ENCODE measurements at regions of chr7 and their contacts with region 1.

Region 1: DNA sequence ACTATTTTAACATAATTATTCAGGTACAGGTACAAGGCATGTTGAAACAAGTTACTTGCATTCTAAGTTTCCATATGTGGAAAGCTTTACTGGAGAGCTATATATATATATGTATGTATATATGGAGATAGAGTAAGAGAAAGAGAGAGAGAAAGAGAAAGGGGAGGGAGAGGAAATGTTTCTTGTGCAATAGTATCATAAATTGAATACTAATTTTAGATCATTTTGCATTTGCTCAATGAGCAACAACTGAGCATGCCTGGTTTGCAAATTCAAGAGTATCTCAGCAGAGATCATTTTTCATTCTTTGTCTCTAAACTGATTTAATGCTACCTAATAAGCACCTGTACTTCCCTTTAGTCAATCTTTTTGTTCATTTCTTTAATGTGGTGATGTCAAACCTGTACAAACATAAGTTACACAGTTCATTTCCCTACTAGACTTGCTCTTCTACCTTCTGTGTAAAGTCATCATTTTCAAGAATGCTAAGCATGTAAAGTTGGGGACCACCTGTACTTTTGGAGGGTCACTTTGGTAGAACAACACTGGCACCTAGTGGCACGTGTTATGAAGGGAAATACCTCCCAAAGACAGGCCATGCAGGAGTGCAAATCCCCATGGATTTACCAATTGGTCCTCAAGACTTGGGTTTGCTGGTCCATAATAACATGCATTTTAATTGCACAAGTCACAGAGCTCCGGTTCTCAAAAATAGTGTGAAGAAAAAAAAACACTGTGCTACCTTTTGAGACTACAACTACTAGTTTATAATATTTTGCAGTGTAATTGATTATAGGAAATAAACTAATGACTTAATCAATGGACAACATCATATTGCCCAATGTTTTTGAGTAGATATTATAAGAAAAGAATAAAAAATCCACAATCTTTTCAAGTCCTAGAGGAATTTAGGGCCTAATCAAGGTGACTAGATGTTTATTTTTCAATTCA is 431.2 kb upstream of the IGFBP3 start:
- DNase-seq: peak; percentile 55
- CTCF ChIP-seq: peak; percentile 36

Region 2: GRCh38 chr7:45923290-45923689 is 429.0 kb before region 1 on chr7:
- in situ Hi-C with region 1: loop called (anchors 5 kb)
- DNase-seq: no peak
- CTCF ChIP-seq: peak; percentile 84

Region 3: DNA sequence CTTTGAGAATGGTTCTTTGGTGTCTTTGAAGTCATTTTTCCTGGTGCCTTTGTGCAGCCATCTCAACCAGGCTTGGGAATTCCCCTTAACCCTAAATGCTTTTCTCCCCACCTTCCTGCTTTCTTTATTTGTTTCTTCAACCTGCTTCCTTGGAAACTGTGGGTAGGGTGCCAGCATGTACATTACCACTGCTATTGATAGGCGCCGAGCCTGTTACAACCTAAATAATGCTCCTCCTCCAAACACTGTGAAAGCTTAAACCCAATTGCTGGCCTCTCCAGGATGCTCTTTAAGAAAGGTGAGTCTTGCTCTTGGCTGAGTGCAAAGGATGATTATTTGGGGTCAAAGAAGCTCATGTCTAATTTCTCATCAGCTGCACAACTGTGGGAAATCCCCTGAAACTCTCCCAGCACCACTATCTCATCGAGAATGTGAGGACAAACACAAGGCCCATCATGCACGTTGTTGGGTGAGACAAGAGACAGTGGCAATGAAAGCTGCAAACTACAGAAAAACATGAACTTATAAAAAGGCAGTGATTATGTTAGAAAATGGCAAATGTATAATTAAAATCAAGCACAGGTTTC is 145.7 kb before region 1 on chr7:
- in situ Hi-C with region 1: no loop called
- DNase-seq: peak; percentile 65
- CTCF ChIP-seq: no peak

Region 4: GRCh38 chr7:47088329-47089067 is 736.2 kb after region 1 on chr7:
- in situ Hi-C with region 1: loop called (anchors 25 kb)
- DNase-seq: peak; percentile 67
- CTCF ChIP-seq: peak; percentile 78

Region 5: DNA sequence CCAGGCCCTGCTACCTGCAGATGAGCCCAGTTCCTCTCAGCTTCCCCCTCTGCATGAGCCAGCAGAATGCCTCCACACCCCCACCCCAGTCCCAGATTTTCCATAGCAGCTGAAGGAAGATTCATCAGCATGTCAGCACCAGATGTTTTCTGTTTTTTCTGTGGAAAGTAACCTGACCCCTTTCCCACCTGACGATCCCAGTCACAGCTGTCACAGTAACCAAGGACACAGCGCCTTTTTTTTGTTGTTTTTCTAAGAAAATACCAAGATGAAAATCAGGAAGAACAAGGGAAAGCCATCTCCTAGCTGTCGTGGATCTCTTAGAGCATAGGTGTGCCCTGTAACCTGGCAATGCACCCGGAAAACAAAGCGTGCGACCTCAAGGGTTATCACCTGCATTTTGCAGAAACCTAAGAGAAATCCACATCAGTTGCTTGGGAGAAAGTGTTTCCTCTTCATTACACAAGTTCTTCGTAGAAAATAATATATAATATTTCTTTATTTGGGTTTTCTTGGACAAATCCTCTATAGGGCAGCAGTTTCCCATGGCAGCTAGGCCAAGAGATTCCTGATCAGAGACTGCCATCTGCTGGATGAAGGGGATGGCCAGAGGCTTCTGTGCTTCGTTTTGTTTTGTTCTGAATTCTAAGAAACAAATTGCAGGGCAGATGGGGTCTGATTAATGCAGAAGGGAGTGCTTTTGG is 827.7 kb after region 1 on chr7:
- in situ Hi-C with region 1: loop called (anchors 25 kb)
- DNase-seq: peak; percentile 46
- CTCF ChIP-seq: peak; percentile 43

Measured in GM13976 (cell line).